Psoas muscle (tissue), 8 donors: ENCODE measurements at regions of chr19 and their contacts with region 1.

Region 1: GRCh38 chr19:51372649-51373504 is at the start of gene NKG7:
- DNase-seq: peak in 1 of 2 donors; percentile 32
- ATAC-seq: no peak
- H3K4me3 ChIP-seq: no peak within 1 kb of the TSS
- H3K27ac ChIP-seq: no peak within 1 kb of the TSS
- H3K4me1 ChIP-seq: no peaks in the 10 kb centered on the region
- H3K27me3 ChIP-seq: no peaks in the 10 kb centered on the region
- CTCF ChIP-seq: no peak
- total RNA-seq, gene NKG7: 0.62 to 2.9 (median 1.9) TPM

Region 2: GRCh38 chr19:51311351-51312257 is 61.3 kb before region 1 on chr19 and contains the start of gene IGLON5:
- intact Hi-C with region 1: no loop called
- DNase-seq: no peak
- ATAC-seq: no peak
- H3K4me3 ChIP-seq: no peak within 1 kb of the TSS
- H3K27ac ChIP-seq: no peak within 1 kb of the TSS
- H3K4me1 ChIP-seq: no peaks in the 10 kb centered on the region
- H3K27me3 ChIP-seq: peaks cover 0 to 46% (median 3%) of the 10 kb centered on the region in 3 donors
- CTCF ChIP-seq: no peak
- total RNA-seq, gene IGLON5: 0.10 TPM in 1 of 4 donors, not detected in the others

Region 3: DNA sequence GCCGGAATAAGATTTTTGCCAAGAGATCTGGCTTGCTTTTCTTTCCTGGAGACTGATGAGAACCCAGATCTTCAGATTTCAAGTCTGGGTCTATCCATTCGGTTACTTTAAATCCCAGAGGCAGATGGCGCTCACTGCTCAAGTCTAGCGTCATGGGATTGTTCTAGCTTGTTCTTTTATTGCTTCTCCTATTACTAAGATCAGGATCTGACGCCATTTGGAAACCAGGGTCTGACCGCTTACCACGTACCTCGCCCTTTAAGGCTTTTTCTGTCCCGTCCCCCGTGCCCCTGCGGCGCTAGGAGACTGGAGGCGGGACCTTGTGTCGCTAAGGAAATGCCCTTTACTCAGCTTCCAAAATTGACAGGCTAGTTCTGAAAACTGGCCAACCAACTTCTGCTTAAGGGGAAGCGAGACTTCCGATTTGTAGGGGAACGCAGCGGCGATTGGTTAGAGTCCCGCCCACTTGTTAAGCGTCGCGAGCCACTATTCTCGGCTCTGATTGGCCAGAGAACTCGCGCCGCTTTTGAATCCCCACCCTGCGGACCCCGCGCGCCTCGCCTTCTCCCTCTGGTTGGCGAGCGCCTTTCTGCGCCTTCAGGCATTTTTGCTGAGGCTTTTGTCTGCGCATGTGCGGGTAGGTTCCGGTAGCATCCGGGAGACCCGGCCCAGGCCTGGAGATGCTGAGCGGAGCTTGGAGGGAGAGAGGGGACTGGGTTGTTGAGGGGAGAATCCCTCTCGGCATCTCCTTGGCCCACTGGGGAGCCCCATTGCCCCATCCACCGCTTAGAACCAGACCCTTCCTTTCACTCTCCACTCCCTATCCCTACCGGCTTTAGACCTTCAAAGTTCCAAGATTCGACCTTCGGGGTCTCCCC is 21.3 kb after region 1 on chr19:
- intact Hi-C with region 1: loop called in 1 of 2 experiments (anchors 2 kb)
- DNase-seq: peak; percentile 92
- ATAC-seq: peak; percentile 97 to 98 (median 98)
- H3K4me3 ChIP-seq: peak overlapping the region; percentile 56
- H3K27ac ChIP-seq: peak overlapping the region; percentile 67
- H3K4me1 ChIP-seq: peaks cover 8% of the 10 kb centered on the region
- H3K27me3 ChIP-seq: peaks cover 0 to 3% (median 0%) of the 10 kb centered on the region in 3 donors
- CTCF ChIP-seq: peak; percentile 7